Common myeloid progenitor, CD34-positive (primary cell): ENCODE measurements at regions of chr3 and their contacts with region 1.

Region 1: GRCh38 chr3:151210676-151211381 is 7.8 kb upstream of the GPR171 start:
- DNase-seq: peak; percentile 61 to 80 (median 74)
- H3K4me3 ChIP-seq: peak overlapping the region in 4 of 7 experiments; percentile 22 to 66 (median 40)
- H3K27ac ChIP-seq: peak overlapping the region in 1 of 2 experiments; percentile 68
- H3K4me1 ChIP-seq: peaks cover 5 to 36% (median 12%) of the 10 kb centered on the region in 4 experiments
- H3K27me3 ChIP-seq: no peaks in the 10 kb centered on the region

Region 2: GRCh38 chr3:151168269-151169094 is 42.3 kb before region 1 on chr3:
- CTCF ChIA-PET with region 1: interaction called, 15 read pairs
- POLR2A ChIA-PET with region 1: interaction called, 4 read pairs
- DNase-seq: peak in 2 of 3 donors; percentile 60 to 63
- H3K4me3 ChIP-seq: no peak overlapping the region
- H3K27ac ChIP-seq: no peak overlapping the region
- H3K4me1 ChIP-seq: peaks cover 34 to 51% (median 45%) of the 10 kb centered on the region in 4 experiments
- H3K27me3 ChIP-seq: no peaks in the 10 kb centered on the region